Activated T-helper 1 cell treated with anti-CD3 and anti-CD28 coated beads, Interleukin-12 subunit alpha, Interleukin-12 subunit beta, Interleukin-2, Interleukin-4 antibody, amounts not matched to agents 30 ng/mL and 10 ng/mL and 1 ng/mL, durations not matched to agents 14 hours and 24 hours and 36 hours (primary cell): ENCODE measurements at regions of chr21 and their contacts with region 1.

Region 1: GRCh38 chr21:32278518-32279376 is at the start of gene MIS18A:
- DNase-seq: peak; percentile 95
- H3K4me3 Mint-ChIP-seq: peak within 1 kb of the TSS; percentile 100
- H3K27ac Mint-ChIP-seq: peak within 1 kb of the TSS; percentile 97
- H3K4me1 Mint-ChIP-seq: peaks cover 21% of the 10 kb centered on the region
- H3K27me3 Mint-ChIP-seq: no peaks in the 10 kb centered on the region
- total RNA-seq, gene MIS18A: 26.8 and 27.5 TPM in 2 replicates

Region 2: DNA sequence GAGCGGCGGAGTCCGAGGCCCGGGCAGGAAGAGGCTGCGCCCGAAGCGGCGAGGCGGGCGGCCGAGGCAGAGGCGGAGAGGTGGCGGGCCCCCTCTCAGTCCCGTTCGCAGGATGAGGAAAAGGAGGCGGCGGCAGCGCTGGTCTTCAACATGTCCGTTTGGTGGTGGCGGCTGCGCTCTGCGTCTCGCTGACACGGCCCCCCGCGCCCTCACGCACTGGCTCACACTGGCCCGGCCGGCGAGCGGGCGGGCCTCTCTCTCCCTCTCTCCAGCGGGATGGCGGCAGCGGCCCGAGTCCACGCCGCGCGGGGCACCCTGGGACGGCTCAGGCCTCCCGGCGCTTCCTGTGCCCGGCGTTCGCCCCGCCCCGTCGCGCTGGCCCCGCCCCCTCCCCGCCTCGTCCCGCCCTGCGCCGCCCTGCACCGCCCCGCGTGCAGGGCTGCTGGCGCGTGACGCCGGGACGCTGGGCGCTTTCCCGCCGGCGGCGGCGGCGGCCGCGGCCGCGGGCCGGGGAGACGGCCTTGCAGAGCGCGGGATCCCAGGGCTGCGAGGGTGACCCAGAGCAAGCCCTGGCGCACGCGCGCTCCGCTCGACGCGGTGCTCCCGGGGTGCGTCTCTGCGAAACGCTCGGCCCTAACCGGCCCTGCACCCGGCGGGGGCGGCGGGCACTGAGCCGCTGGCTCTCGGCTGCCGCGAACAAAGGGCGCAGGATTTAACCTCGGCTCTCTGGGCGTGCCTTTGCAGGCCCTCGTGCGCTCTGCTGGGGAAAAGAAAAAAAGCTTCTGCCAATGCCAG is 546.7 kb before region 1 on chr21 and contains the start of gene SCAF4:
- intact Hi-C with region 1: loop called (anchors 1 kb)
- DNase-seq: peak; percentile 78
- H3K4me3 Mint-ChIP-seq: no peak within 1 kb of the TSS
- H3K27ac Mint-ChIP-seq: peak within 1 kb of the TSS; percentile 79
- H3K4me1 Mint-ChIP-seq: no peaks in the 10 kb centered on the region
- H3K27me3 Mint-ChIP-seq: no peaks in the 10 kb centered on the region
- total RNA-seq, gene SCAF4: 66.1 and 70.6 TPM in 2 replicates

Region 3: DNA sequence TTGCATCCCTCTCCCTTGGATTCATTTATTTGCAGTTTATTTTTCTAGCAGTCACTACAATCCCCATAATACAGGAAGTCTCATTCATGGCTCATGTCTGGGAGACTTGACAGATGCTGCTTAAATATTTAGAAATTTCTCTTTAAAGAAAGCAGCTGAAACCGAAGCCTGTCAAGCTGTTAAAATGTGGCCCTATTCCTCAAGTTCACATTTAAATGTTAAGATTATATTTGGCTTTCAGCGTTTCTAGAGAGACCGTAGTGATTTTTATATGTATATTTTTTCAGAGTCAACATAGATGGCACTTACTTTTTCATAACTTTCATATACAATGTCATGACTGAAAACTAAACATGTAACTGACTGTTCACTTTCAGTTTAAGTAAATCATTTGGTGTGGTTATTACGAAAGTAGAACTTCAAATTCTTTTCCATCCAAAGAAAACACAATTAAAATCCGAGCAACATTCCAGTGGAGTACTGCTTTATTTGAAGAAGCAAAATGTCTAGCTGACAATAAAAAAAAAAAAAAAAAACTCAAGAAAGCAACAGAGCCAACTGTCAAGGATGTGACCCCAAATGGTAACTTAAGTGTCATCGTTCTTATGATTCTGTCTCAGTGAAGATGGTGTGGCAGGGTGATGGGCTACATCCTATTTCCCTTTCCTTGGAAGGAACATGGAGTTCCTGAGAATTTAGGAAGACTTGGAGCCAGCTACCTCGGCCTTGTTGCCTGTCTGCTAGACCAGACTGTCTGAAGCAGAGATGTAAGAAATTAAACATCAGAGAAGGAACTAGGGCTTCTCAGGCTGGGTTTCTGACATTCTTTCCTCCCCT is 37.7 kb before region 1 on chr21:
- intact Hi-C with region 1: loop called (anchors 1 kb)
- DNase-seq: no peak
- H3K4me3 Mint-ChIP-seq: no peak overlapping the region
- H3K27ac Mint-ChIP-seq: no peak overlapping the region
- H3K4me1 Mint-ChIP-seq: peaks cover 14% of the 10 kb centered on the region
- H3K27me3 Mint-ChIP-seq: peaks cover 9% of the 10 kb centered on the region

Region 4: GRCh38 chr21:32392880-32393676 is 114.3 kb after region 1 on chr21 and contains the start of gene URB1:
- intact Hi-C with region 1: loop called (anchors 1 kb)
- DNase-seq: peak; percentile 89
- H3K4me3 Mint-ChIP-seq: peak within 1 kb of the TSS; percentile 91
- H3K27ac Mint-ChIP-seq: peak within 1 kb of the TSS; percentile 88
- H3K4me1 Mint-ChIP-seq: peaks cover 48% of the 10 kb centered on the region
- H3K27me3 Mint-ChIP-seq: peaks cover 3% of the 10 kb centered on the region
- total RNA-seq, gene URB1: 42.1 and 42.8 TPM in 2 replicates

Region 5: DNA sequence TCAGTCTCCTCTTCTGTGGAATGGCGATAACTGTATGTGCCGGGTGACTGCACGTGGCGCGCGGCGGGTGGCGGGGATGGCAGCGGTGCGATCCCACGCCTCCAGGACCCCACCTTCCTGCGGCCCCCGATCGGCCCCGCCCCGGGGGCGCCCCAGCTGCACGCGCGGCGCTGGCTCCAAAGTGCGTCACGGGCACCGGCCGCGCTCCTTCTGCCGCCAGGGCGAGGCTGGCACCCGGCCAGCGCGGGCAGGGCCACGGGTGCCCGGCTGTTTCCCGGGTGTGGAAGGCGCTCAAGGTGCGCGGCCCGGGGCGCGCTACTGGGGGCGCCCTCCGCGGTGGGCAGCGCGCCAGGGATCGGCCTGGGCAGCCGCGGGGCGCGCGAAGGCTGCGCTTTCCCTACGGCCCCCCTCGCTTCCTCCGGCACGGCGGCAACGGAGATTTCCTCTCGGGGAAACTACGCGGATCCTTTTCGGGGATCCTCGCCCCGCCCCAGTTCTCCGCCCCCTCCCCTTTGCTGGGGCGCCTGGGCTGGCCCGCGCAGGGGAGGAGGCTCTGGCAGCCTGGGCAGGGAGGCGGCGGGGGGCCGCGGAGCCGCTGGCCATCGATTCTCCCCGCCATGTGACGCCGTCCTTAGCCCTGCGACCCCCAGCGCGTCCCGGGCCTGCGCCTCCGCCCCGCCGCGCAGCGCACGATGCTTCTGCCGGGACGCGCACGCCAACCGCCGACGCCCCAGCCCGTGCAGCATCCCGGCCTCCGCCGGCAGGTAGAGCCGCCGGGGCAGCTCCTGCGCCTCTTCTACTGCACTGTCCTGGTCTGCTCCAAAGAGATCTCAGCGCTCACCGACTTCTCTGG is 133.6 kb after region 1 on chr21 and contains the start of gene EVA1C:
- intact Hi-C with region 1: loop called (anchors 1 kb)
- DNase-seq: peak; percentile 39
- H3K4me3 Mint-ChIP-seq: peak within 1 kb of the TSS; percentile 94
- H3K27ac Mint-ChIP-seq: peak within 1 kb of the TSS; percentile 87
- H3K4me1 Mint-ChIP-seq: peaks cover 33% of the 10 kb centered on the region
- H3K27me3 Mint-ChIP-seq: peaks cover 12% of the 10 kb centered on the region
- total RNA-seq, gene EVA1C: 6.2 and 7.6 TPM in 2 replicates